ENCODE measurements at regions of chr1 and their contacts with region 1.

Region 1: GRCh38 chr1:233057836-233058235 is 107.4 kb downstream of the NTPCR start:
- DNase-seq: no peak
- ATAC-seq: no peak
- H3K4me3 ChIP-seq: no peak overlapping the region
- H3K27ac ChIP-seq: no peak overlapping the region
- H3K4me1 ChIP-seq: no peaks in the 10 kb centered on the region
- H3K27me3 ChIP-seq: peaks cover 2% of the 10 kb centered on the region; the same call in 1 of the 2 replicates
- CTCF ChIP-seq: no peak
- POLR2A ChIP-seq: no peak
- RAD21 ChIP-seq: no peak

Region 2: GRCh38 chr1:231969074-231969473 is 1088.8 kb before region 1 on chr1:
- CTCF ChIA-PET with region 1: interaction called, 10 read pairs
- POLR2A ChIA-PET with region 1: no interaction called
- dilution Hi-C with region 1: no loop called
- in situ Hi-C with region 1: no loop called
- intact Hi-C with region 1: no loop called
- DNase-seq: no peak
- ATAC-seq: no peak
- H3K4me3 ChIP-seq: no peak overlapping the region
- H3K27ac ChIP-seq: no peak overlapping the region
- H3K4me1 ChIP-seq: no peaks in the 10 kb centered on the region
- H3K27me3 ChIP-seq: no peaks in the 10 kb centered on the region
- CTCF ChIP-seq: no peak
- POLR2A ChIP-seq: no peak
- RAD21 ChIP-seq: no peak